Activated CD4-positive, alpha-beta memory T cell treated with anti-CD3 and anti-CD28 coated beads for 36 hours (primary cell): ENCODE measurements at regions of chr10 and their contacts with region 1.

Region 1: GRCh38 chr10:72297968-72298773 is 24.4 kb downstream of the DDIT4 start:
- DNase-seq: peak; percentile 98
- H3K4me3 Mint-ChIP-seq: peak overlapping the region; percentile 86
- H3K27ac Mint-ChIP-seq: peak overlapping the region; percentile 100
- H3K4me1 Mint-ChIP-seq: peaks cover 56% of the 10 kb centered on the region
- H3K27me3 Mint-ChIP-seq: peaks cover 3% of the 10 kb centered on the region

Region 2: DNA sequence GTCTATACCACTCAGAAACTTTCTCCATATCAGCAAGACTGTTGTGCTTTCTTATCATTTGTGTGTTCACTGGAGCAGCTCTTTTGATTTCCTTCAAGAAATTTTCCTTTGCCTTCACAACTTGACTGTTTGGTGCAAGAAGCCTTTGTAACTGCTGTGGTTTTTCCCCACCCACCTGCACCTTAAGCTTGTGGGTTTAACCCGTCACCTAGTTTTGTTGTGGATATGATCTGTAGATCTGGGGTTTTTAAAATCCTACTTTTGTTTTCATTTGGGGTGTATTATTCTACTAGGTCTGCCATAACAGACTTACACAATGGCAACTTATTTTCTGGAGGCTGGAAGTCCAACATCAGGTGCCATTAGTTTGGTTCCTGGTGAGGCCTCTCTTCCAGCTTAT is 364.5 kb before region 1 on chr10:
- CTCF ChIA-PET with region 1: no interaction called
- POLR2A ChIA-PET with region 1: no interaction called
- intact Hi-C with region 1: no loop called
- DNase-seq: peak; percentile 80
- H3K4me3 Mint-ChIP-seq: no peak overlapping the region
- H3K27ac Mint-ChIP-seq: no peak overlapping the region
- H3K4me1 Mint-ChIP-seq: peaks cover 20% of the 10 kb centered on the region
- H3K27me3 Mint-ChIP-seq: peaks cover 3% of the 10 kb centered on the region

Region 3: DNA sequence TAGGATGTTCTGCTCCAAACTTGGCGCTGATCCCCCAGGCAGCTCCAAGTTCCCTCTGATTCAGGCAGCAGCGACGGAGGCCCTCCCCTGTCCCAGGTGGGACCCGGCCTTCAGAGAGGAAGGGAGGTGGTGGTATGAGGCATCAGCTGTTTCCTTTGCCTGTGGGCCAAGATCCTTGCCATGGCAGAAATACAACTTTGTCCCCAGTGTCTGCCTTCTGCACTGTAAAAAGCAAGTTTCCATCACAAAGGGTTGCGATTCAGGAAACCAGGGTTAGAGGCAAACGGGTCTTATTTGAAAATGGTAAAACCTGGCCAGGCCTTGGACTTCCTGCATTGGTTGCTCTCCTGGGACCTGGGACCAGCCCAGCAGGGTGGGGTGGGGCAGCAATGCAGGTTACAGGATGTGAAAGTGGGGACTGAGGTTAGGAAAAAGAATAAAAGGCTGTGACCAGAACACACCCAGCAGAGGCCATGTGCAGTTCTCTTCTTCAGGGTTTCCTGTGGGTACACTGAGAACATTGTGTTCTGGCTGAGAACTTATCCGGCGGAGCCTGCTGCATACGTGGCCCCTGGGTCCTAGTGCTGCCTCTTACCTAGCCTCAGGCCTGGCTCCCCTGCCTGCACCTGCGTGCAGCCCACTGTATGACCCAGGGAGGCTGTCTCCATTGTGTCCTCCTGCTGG is 49.6 kb before region 1 on chr10:
- CTCF ChIA-PET with region 1: no interaction called
- POLR2A ChIA-PET with region 1: interaction called, 11 read pairs
- intact Hi-C with region 1: loop called (anchors 1 kb)
- DNase-seq: peak; percentile 84
- H3K4me3 Mint-ChIP-seq: peak overlapping the region; percentile 83
- H3K27ac Mint-ChIP-seq: peak overlapping the region; percentile 98
- H3K4me1 Mint-ChIP-seq: peaks cover 74% of the 10 kb centered on the region
- H3K27me3 Mint-ChIP-seq: no peaks in the 10 kb centered on the region

Region 4: GRCh38 chr10:72260588-72261322 is 37.4 kb before region 1 on chr10:
- CTCF ChIA-PET with region 1: interaction called, 15 read pairs
- POLR2A ChIA-PET with region 1: interaction called, 41 read pairs
- intact Hi-C with region 1: loop called (anchors 1 kb)
- DNase-seq: peak; percentile 95
- H3K4me3 Mint-ChIP-seq: peak overlapping the region; percentile 84
- H3K27ac Mint-ChIP-seq: peak overlapping the region; percentile 99
- H3K4me1 Mint-ChIP-seq: peaks cover 60% of the 10 kb centered on the region
- H3K27me3 Mint-ChIP-seq: peaks cover 2% of the 10 kb centered on the region

Region 5: GRCh38 chr10:72273410-72274212 is 24.6 kb before region 1 on chr10 and contains the start of gene DDIT4:
- CTCF ChIA-PET with region 1: interaction called, 64 read pairs
- POLR2A ChIA-PET with region 1: interaction called, 263 read pairs
- intact Hi-C with region 1: loop called (anchors 1 kb)
- DNase-seq: peak; percentile 99
- H3K4me3 Mint-ChIP-seq: peak within 1 kb of the TSS; percentile 99
- H3K27ac Mint-ChIP-seq: peak within 1 kb of the TSS; percentile 97
- H3K4me1 Mint-ChIP-seq: peaks cover 46% of the 10 kb centered on the region
- H3K27me3 Mint-ChIP-seq: peaks cover 5% of the 10 kb centered on the region
- total RNA-seq, gene DDIT4: 637 TPM

Region 6: GRCh38 chr10:72285972-72286521 is 12.1 kb before region 1 on chr10:
- CTCF ChIA-PET with region 1: no interaction called
- POLR2A ChIA-PET with region 1: interaction called, 32 read pairs
- intact Hi-C with region 1: loop called (anchors 1 kb)
- DNase-seq: no peak
- H3K4me3 Mint-ChIP-seq: peak overlapping the region; percentile 45
- H3K27ac Mint-ChIP-seq: peak overlapping the region; percentile 78
- H3K4me1 Mint-ChIP-seq: peaks cover 32% of the 10 kb centered on the region
- H3K27me3 Mint-ChIP-seq: no peaks in the 10 kb centered on the region

Region 7: GRCh38 chr10:72308320-72308987 is 10.3 kb after region 1 on chr10:
- CTCF ChIA-PET with region 1: interaction called, 6 read pairs
- POLR2A ChIA-PET with region 1: interaction called, 50 read pairs
- intact Hi-C with region 1: loop called (anchors 1 kb)
- DNase-seq: peak; percentile 70
- H3K4me3 Mint-ChIP-seq: no peak overlapping the region
- H3K27ac Mint-ChIP-seq: peak overlapping the region; percentile 85
- H3K4me1 Mint-ChIP-seq: peaks cover 65% of the 10 kb centered on the region
- H3K27me3 Mint-ChIP-seq: no peaks in the 10 kb centered on the region

Region 8: GRCh38 chr10:72319416-72320254 is 21.5 kb after region 1 on chr10:
- CTCF ChIA-PET with region 1: interaction called, 11 read pairs
- POLR2A ChIA-PET with region 1: interaction called, 219 read pairs
- intact Hi-C with region 1: loop called (anchors 1 kb)
- DNase-seq: peak; percentile 93
- H3K4me3 Mint-ChIP-seq: peak overlapping the region; percentile 85
- H3K27ac Mint-ChIP-seq: peak overlapping the region; percentile 100
- H3K4me1 Mint-ChIP-seq: peaks cover 79% of the 10 kb centered on the region
- H3K27me3 Mint-ChIP-seq: no peaks in the 10 kb centered on the region